ENCODE measurements at regions of chr20 and their contacts with region 1.

Region 1: DNA sequence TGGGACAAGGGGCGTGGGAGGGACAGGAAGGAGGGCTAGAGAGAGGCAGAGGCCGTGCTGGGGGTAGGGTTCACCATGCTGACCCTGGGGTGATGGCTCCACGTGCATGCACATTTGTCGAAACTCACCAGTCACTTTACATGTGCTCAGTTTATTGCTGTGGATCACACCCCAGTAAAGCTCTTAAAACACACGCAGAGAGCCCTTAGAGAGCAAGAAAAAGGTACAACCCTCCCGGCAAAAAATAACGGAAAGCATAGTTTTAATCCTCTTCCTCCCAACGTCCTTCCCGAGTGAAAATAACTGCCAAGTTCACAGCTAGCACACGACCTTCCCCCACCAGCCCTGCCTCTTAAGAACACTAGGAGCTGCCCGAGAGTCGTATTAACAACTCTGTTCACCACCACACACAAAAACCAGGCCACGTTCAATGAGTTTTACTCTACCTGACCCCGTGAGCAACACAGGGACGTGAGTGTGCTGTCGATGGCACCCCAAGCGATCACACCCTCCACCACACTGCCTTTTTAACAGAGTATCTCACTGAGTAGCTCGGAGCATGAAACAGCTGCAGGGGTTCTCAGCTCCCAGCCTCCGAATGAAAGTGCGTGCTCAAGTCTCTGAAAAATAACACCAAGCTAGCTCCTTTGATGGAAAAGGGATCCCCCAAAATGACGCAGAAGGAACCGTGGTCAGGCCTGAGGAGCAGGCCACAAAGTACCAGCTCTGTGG is 39.7 kb downstream of the TAF4 start:
- DNase-seq: peak in 2 of 3 donors; percentile 14 to 20
- ATAC-seq: peak; percentile 28
- H3K4me3 ChIP-seq: no peak overlapping the region
- H3K4me1 ChIP-seq: peaks cover 7% of the 10 kb centered on the region
- CTCF ChIP-seq: no peak

Region 2: DNA sequence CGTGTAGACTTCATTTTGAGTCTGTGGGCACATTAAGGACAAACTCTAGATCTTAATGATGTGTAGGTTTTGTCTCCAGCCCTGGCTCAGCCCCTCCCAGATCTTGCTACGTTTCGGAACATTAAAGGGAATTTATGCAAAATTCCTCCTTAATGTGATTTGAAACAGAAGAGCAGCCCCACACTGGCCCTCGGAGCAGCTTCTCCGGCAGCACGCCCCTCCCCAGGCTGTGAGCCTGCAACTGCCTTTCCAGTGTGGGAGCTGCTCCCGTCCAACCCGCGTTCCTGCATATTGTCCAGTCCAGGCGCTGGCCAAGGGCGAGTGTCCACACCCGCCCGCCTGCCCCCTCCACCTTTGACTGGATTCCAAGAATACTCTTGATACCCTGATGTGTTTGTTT is 217.6 kb before region 1 on chr20:
- intact Hi-C with region 1: no loop called
- DNase-seq: peak in 2 of 3 donors; percentile 4 to 40
- ATAC-seq: no peak
- H3K4me3 ChIP-seq: no peak overlapping the region
- H3K4me1 ChIP-seq: no peaks in the 10 kb centered on the region
- CTCF ChIP-seq: no peak

Region 3: GRCh38 chr20:62121776-62122631 is 96.0 kb after region 1 on chr20 and contains the start of gene LSM14B:
- intact Hi-C with region 1: loop called in 1 of 2 experiments (anchors 10 kb)
- DNase-seq: peak; percentile 94 to 98 (median 98)
- ATAC-seq: peak; percentile 91
- H3K4me3 ChIP-seq: peak within 1 kb of the TSS; percentile 70
- H3K4me1 ChIP-seq: peaks cover 11% of the 10 kb centered on the region
- CTCF ChIP-seq: no peak
- total RNA-seq, gene LSM14B: 33.5 to 49.1 (median 36.1) TPM

Measured in mucosa of descending colon (tissue), 3 donors.